ENCODE measurements at regions of chr9 and their contacts with region 1.

Region 1: DNA sequence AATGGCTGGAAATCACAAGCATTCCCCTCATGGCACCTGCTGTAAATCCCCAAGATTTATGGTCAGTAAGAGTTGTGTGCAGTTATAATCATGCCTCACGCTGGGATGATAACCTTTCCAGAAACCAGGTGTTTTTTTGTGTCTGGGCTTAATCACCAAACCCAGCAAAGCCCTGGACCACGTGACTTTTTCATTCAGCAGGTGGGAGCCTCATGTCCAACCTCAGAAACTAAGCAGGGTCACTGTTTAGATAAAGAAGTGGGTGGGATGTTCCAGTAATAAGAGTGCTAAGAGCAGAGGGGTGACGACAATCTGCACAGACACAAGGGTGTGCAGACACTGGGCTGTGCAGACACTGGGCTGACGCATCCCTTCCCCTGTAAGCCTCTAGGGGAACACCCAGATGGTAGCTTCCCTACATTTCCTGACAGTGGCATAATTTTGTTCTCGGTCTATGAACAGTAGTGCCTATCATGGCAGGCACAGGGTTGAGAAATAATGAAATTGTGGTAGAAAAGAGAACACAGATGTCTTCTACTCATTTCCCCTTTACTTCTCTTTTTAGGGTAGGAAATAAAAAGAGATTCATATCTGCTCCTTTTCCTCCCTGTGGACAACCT is 85.1 kb downstream of the SAXO1 start:
- DNase-seq: no peak
- ATAC-seq: peak in 1 of 4 donors; percentile 80
- H3K4me3 ChIP-seq: no peak overlapping the region
- H3K27ac ChIP-seq: no peak overlapping the region
- H3K4me1 ChIP-seq: no peaks in the 10 kb centered on the region
- H3K27me3 ChIP-seq: no peaks in the 10 kb centered on the region
- CTCF ChIP-seq: no peak
- POLR2A ChIP-seq: no peak

Region 2: GRCh38 chr9:18888290-18888689 is 59.6 kb before region 1 on chr9:
- intact Hi-C with region 1: loop called in 1 of 10 experiments (anchors 10 kb)
- DNase-seq: peak in 3 of 5 donors; percentile 29 to 55 (median 37)
- ATAC-seq: peak in 3 of 4 donors; percentile 72 to 92 (median 87)
- H3K4me3 ChIP-seq: no peak overlapping the region
- H3K27ac ChIP-seq: no peak overlapping the region
- H3K4me1 ChIP-seq: peaks cover 0 to 10% (median 1%) of the 10 kb centered on the region in 12 donors
- H3K27me3 ChIP-seq: no peaks in the 10 kb centered on the region
- CTCF ChIP-seq: no peak
- POLR2A ChIP-seq: no peak

Measured in heart left ventricle (tissue), 16 donors.